Panc1 (cell line): ENCODE measurements at regions of chr6 and their contacts with region 1.

Region 1: DNA sequence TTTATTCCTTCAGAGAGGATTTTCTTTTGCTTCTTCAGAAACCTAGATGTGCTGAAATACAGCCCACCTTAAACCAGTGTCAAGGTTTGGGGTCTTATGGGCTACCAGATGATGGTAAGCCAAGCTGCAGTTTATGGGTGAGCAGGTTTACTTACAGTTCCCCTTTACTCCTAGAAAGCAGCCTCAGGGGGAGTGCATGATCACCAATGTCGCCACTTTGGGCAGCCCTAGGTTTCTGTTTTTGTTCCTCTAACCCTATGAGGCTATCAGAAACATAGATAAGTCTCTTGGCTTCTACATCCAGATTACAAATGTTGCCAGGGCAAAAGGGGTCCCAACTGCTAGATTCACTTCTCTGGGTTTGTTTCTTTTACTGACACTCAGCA is 67.2 kb downstream of the TRIM27 start:
- DNase-seq: no peak
- ATAC-seq: no peak
- H3K4me3 ChIP-seq: no peak overlapping the region
- H3K27ac ChIP-seq: no peak overlapping the region
- H3K4me1 ChIP-seq: no peaks in the 10 kb centered on the region
- H3K27me3 ChIP-seq: no peaks in the 10 kb centered on the region
- CTCF ChIP-seq: no peak

Region 2: GRCh38 chr6:28747631-28748157 is 108.9 kb before region 1 on chr6:
- CTCF ChIA-PET with region 1: no interaction called
- POLR2A ChIA-PET with region 1: interaction called, 18 read pairs
- in situ Hi-C with region 1: no loop called
- intact Hi-C with region 1: no loop called
- DNase-seq: peak; percentile 95
- ATAC-seq: peak; percentile 99
- H3K4me3 ChIP-seq: peak overlapping the region; percentile 65 to 88
- H3K27ac ChIP-seq: no peak overlapping the region
- H3K4me1 ChIP-seq: peaks cover 21% of the 10 kb centered on the region
- H3K27me3 ChIP-seq: no peaks in the 10 kb centered on the region
- CTCF ChIP-seq: no peak

Region 3: GRCh38 chr6:28789553-28790083 is 67.0 kb before region 1 on chr6:
- CTCF ChIA-PET with region 1: no interaction called
- POLR2A ChIA-PET with region 1: no interaction called
- in situ Hi-C with region 1: no loop called
- intact Hi-C with region 1: no loop called
- DNase-seq: no peak
- ATAC-seq: peak; percentile 81
- H3K4me3 ChIP-seq: peak overlapping the region; percentile 66 to 96
- H3K27ac ChIP-seq: no peak overlapping the region
- H3K4me1 ChIP-seq: peaks cover under 1% of the 10 kb centered on the region; the same call in 1 of the 2 replicates
- H3K27me3 ChIP-seq: peaks cover 2% of the 10 kb centered on the region; the same call in 1 of the 2 replicates
- CTCF ChIP-seq: no peak

Region 4: GRCh38 chr6:28802417-28803336 is 53.9 kb before region 1 on chr6:
- CTCF ChIA-PET with region 1: no interaction called
- POLR2A ChIA-PET with region 1: no interaction called
- in situ Hi-C with region 1: no loop called
- intact Hi-C with region 1: no loop called
- DNase-seq: peak; percentile 97
- ATAC-seq: peak; percentile 98
- H3K4me3 ChIP-seq: peak overlapping the region; percentile 61 to 92
- H3K27ac ChIP-seq: peak overlapping the region; percentile 41; the same call in 1 of the 2 replicates
- H3K4me1 ChIP-seq: peaks cover 17% of the 10 kb centered on the region
- H3K27me3 ChIP-seq: no peaks in the 10 kb centered on the region
- CTCF ChIP-seq: no peak

Region 5: GRCh38 chr6:28884423-28885131 is 28.0 kb after region 1 on chr6:
- CTCF ChIA-PET with region 1: no interaction called
- POLR2A ChIA-PET with region 1: interaction called, 11 read pairs
- in situ Hi-C with region 1: no loop called
- intact Hi-C with region 1: no loop called
- DNase-seq: no peak
- ATAC-seq: no peak
- H3K4me3 ChIP-seq: no peak overlapping the region
- H3K27ac ChIP-seq: no peak overlapping the region
- H3K4me1 ChIP-seq: peaks cover 5% of the 10 kb centered on the region; the same call in 1 of the 2 replicates
- H3K27me3 ChIP-seq: no peaks in the 10 kb centered on the region
- CTCF ChIP-seq: no peak